ENCODE measurements at regions of chr1 and their contacts with region 1.

Region 1: DNA sequence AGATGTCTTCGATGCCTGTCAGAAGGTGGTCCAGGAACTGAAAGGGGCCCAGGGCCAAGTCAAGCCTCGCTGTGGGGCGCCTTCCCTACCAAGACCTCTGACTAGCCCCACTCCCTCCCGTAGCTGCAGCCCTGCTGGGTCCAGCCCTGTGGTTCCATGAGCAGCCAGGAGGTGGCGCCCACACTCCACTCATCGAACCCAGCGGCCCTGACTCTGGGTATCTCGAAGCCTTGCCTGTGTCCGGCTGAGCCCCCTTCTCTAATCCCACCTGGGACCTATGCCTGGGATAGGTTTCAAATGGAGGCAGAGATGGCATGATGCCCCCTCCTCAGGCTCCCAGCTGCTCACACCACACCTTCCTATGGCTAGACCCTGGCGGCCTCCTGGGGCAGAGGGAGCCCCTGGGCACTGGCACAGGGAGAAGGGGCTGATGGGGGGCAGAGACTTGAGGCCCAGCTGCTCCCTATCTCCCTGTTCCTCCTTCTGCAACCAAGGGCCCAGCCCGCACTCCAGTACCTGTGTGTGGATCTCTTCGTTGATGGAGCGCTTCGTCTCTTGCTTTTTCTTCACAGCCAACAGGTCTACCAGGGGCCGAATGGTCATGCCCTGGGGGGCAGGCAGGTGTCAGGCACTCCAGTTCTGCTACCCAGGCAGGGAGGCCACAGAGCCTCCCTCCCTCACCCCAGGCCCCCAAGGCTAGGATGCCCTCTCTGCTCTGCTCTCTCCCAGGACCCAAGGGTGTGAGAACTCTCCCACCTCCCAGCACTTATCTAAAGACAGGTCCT is 52.0 kb downstream of the SLC9A1 start:
- DNase-seq: peak in 1 of 2 donors; percentile 65
- ATAC-seq: peak; percentile 49 to 77
- H3K4me3 ChIP-seq: no peak overlapping the region
- H3K27ac ChIP-seq: no peak overlapping the region
- H3K4me1 ChIP-seq: peaks cover 0 to 6% of the 10 kb centered on the region in 2 donors
- H3K27me3 ChIP-seq: no peaks in the 10 kb centered on the region
- CTCF ChIP-seq: peak; percentile 93 to 99 (median 98)
- POLR2A ChIP-seq: no peak

Region 2: GRCh38 chr1:27071049-27071416 is 31.9 kb before region 1 on chr1:
- in situ Hi-C with region 1: no loop called
- intact Hi-C with region 1: no loop called
- DNase-seq: no peak
- ATAC-seq: no peak
- H3K4me3 ChIP-seq: no peak overlapping the region
- H3K27ac ChIP-seq: no peak overlapping the region
- H3K4me1 ChIP-seq: no peaks in the 10 kb centered on the region
- H3K27me3 ChIP-seq: no peaks in the 10 kb centered on the region
- CTCF ChIP-seq: no peak
- POLR2A ChIP-seq: no peak

Region 3: GRCh38 chr1:27192039-27192529 is 89.2 kb after region 1 on chr1:
- in situ Hi-C with region 1: loop called in 1 of 4 experiments (anchors 5 kb)
- intact Hi-C with region 1: no loop called
- DNase-seq: no peak
- ATAC-seq: no peak
- H3K4me3 ChIP-seq: no peak overlapping the region
- H3K27ac ChIP-seq: no peak overlapping the region
- H3K4me1 ChIP-seq: no peaks in the 10 kb centered on the region
- H3K27me3 ChIP-seq: no peaks in the 10 kb centered on the region
- CTCF ChIP-seq: no peak
- POLR2A ChIP-seq: no peak